ENCODE measurements at regions of chr4 and their contacts with region 1.

Region 1: DNA sequence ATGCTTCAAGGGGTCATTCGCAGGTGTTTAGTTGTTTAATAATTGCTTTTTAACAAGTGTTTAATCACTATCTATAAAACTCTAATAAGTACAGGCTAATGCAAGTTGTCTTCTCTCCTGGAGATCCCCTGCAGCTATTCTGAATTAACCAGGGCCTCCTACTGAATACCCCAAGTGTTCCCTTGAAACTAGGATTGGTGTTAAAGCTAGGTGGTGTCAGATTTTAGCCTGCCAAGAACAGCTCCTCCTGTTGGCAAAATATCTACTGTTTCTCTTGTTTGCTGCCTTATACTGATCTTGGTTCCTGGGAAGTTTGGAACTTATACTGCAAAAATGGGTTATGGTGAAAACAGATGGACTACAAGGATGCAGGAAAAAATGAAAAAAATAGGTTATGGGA is 26.1 kb upstream of the TMEM154 start:
- DNase-seq: no peak
- ATAC-seq: peak; percentile 70
- H3K4me3 Mint-ChIP-seq: no peak overlapping the region
- H3K27ac Mint-ChIP-seq: peak overlapping the region; percentile 25; the same call in 1 of the 2 replicates
- H3K4me1 Mint-ChIP-seq: peaks cover 66% of the 10 kb centered on the region
- H3K27me3 Mint-ChIP-seq: no peaks in the 10 kb centered on the region
- CTCF ChIP-seq: no peak

Region 2: GRCh38 chr4:152605641-152606335 is 100.1 kb before region 1 on chr4:
- CTCF ChIA-PET with region 1: interaction called, 14 read pairs
- POLR2A ChIA-PET with region 1: no interaction called
- DNase-seq: no peak
- ATAC-seq: no peak; the same call in 1 of the 2 replicates
- H3K4me3 Mint-ChIP-seq: no peak overlapping the region
- H3K27ac Mint-ChIP-seq: peak overlapping the region; percentile 21; the same call in 1 of the 2 replicates
- H3K4me1 Mint-ChIP-seq: peaks cover 47% of the 10 kb centered on the region
- H3K27me3 Mint-ChIP-seq: no peaks in the 10 kb centered on the region; the same call in 1 of the 2 replicates
- CTCF ChIP-seq: no peak

Region 3: GRCh38 chr4:152679414-152680281 is 26.3 kb before region 1 on chr4 and contains the start of gene TMEM154:
- CTCF ChIA-PET with region 1: interaction called, 11 read pairs
- POLR2A ChIA-PET with region 1: no interaction called
- DNase-seq: peak; percentile 73
- ATAC-seq: peak; percentile 91
- H3K4me3 Mint-ChIP-seq: peak within 1 kb of the TSS; percentile 73
- H3K27ac Mint-ChIP-seq: no peak within 1 kb of the TSS
- H3K4me1 Mint-ChIP-seq: peaks cover 47% of the 10 kb centered on the region
- H3K27me3 Mint-ChIP-seq: peaks cover 17% of the 10 kb centered on the region
- CTCF ChIP-seq: no peak
- total RNA-seq, gene TMEM154: 1.7 to 2.1 TPM (median 1.9 TPM) in 3 replicates

Region 4: GRCh38 chr4:152779513-152780266 is 73.8 kb after region 1 on chr4 and contains the starts of genes ARFIP1 and TIGD4:
- CTCF ChIA-PET with region 1: interaction called, 13 read pairs
- POLR2A ChIA-PET with region 1: no interaction called
- DNase-seq: peak; percentile 99
- ATAC-seq: peak; percentile 93
- H3K4me3 Mint-ChIP-seq: peak within 1 kb of the TSS; percentile 99
- H3K27ac Mint-ChIP-seq: peak within 1 kb of the TSS; percentile 100
- H3K4me1 Mint-ChIP-seq: peaks cover 27% of the 10 kb centered on the region
- H3K27me3 Mint-ChIP-seq: no peaks in the 10 kb centered on the region; the same call in 1 of the 2 replicates
- CTCF ChIP-seq: no peak
- total RNA-seq, gene ARFIP1: 29.2 to 35.3 TPM (median 31.2 TPM) in 3 replicates
- total RNA-seq, gene TIGD4: 1.9 to 2.5 TPM (median 2.0 TPM) in 3 replicates

Region 5: DNA sequence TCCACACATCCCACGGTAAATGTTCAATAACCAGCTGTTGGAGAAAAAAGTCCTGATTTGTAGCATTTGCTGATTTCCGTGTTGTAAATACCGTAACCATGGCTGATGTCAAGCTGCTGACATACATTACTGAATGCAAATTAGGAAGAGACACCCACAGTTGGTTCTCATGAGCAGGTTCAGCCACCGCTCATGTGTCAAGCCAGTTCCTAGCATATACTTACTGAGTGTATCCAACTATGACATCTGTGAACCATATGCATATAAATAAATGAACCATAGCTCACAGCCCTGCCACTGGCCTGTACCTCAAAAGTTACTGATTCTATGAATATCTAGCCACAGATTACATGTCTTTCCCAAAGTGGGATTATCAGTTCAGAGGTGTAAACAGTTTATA is 259.7 kb after region 1 on chr4:
- CTCF ChIA-PET with region 1: no interaction called
- POLR2A ChIA-PET with region 1: no interaction called
- DNase-seq: no peak
- ATAC-seq: no peak
- H3K4me3 Mint-ChIP-seq: no peak overlapping the region
- H3K27ac Mint-ChIP-seq: no peak overlapping the region
- H3K4me1 Mint-ChIP-seq: peaks cover 28% of the 10 kb centered on the region
- H3K27me3 Mint-ChIP-seq: no peaks in the 10 kb centered on the region
- CTCF ChIP-seq: no peak

Measured in WTC11 (cell line).